Heart left ventricle (tissue), 16 donors: ENCODE measurements at regions of chr19 and their contacts with region 1.

Region 1: DNA sequence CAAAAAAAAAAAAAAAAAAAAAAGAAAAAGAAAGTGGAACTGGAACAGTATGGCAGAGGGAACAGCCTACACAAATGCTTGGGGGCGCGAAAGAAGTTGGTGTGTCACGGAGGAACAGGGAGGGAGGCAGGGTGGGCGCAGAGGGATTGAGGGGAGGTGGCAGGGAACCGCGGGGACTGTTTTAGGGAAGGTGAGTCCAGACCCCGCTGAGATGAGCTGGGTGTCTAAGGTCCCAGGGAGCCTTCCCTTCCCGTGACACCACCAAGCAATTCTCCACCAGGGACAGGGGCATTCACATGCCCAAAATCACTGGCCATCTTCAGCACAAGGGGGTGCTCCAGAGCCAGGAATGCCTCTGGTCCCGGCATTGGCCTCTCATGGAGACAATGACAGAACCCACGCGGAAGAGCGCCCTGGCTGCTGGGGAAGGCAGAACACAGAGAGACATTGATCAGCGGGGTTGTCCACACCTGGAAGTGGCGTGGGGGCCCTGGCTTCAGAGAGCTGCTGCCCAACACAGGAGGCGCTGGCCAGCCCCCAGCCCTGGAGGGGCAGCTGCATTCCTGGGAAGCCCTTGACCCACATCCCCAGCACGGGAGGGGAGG is 6.9 kb downstream of the PEAK3 start:
- DNase-seq: peak; percentile 66 to 79 (median 78)
- ATAC-seq: peak; percentile 33 to 58 (median 42)
- H3K4me3 ChIP-seq: no peak overlapping the region
- H3K27ac ChIP-seq: peak overlapping the region in 8 of 12 donors; percentile 8 to 56 (median 24)
- H3K4me1 ChIP-seq: peaks cover 9 to 53% (median 41%) of the 10 kb centered on the region in 12 donors
- H3K27me3 ChIP-seq: no peaks in the 10 kb centered on the region
- CTCF ChIP-seq: peak; percentile 32 to 67 (median 53)
- POLR2A ChIP-seq: no peak

Region 2: GRCh38 chr19:2385053-2385721 is 110.2 kb after region 1 on chr19:
- intact Hi-C with region 1: loop called in 7 of 10 experiments (anchors 5 to 10 kb)
- DNase-seq: no peak
- ATAC-seq: peak in 1 of 4 donors; percentile 20
- H3K4me3 ChIP-seq: no peak overlapping the region
- H3K27ac ChIP-seq: no peak overlapping the region
- H3K4me1 ChIP-seq: peaks cover 0 to 20% (median 0%) of the 10 kb centered on the region in 12 donors
- H3K27me3 ChIP-seq: peaks cover 0 to 32% (median 5%) of the 10 kb centered on the region in 9 donors
- CTCF ChIP-seq: no peak
- POLR2A ChIP-seq: no peak